ENCODE measurements at regions of chr1 and their contacts with region 1.

Region 1: DNA sequence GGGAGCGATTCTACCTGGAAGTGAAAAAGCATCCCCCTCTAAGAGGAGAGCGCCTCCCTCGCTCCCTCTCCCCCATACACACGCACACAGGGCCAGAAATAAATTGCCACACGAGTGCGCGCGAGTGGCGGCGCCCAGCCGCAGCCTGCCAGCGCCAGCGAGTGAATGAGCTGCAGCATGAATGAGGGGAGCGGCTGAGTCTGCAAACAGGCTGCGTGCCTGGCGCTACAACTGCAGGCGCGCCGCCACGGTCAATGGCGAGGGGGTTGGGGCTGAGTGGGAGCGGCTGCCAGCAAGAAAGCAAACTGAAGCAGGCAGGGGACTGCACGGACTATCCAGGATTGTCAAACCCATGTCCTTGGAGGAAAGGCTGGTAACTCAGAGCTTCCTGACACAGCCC is 2.2 kb downstream of the CAMK1G start:
- DNase-seq: peak; percentile 81
- H3K4me3 ChIP-seq: peak overlapping the region; percentile 31 to 80
- H3K27ac ChIP-seq: peak overlapping the region in 1 of 2 experiments; percentile 89; a peak in 3 of 4 replicates
- H3K4me1 ChIP-seq: peaks cover 18 to 52% of the 10 kb centered on the region in 2 experiments
- H3K27me3 ChIP-seq: no peaks in the 10 kb centered on the region
- CTCF ChIP-seq: peak; percentile 28; the same call in 1 of the 2 replicates
- EP300 ChIP-seq: no peak; a peak in 1 of 4 replicates
- RAD21 ChIP-seq: peak; percentile 19; the same call in 1 of the 2 replicates

Region 2: DNA sequence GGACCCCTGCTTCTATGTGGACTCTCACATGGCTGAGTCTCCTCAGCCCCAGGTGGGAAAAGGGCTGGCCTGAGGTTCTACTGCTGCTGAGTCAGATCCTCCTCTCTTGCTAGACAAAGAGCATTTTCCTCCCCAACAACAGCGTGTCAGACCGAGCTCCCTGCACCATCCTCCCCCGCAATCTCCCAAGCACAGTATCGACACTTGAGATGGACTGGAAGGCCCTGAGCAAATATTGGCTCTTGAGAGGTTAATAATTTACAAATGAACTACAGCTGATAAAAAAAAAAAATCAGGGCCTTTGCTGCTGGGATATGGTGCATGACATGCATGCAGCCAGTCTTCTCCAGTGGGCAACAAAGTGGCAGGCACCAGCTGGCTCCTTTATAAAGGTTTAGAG is 57.7 kb before region 1 on chr1:
- CTCF ChIA-PET with region 1: no interaction called
- POLR2A ChIA-PET with region 1: no interaction called
- DNase-seq: no peak
- H3K4me3 ChIP-seq: no peak overlapping the region
- H3K27ac ChIP-seq: peak overlapping the region in 1 of 2 experiments; percentile 76; a peak in 2 of 4 replicates
- H3K4me1 ChIP-seq: no peaks in the 10 kb centered on the region; a peak in 2 of 4 replicates
- H3K27me3 ChIP-seq: no peaks in the 10 kb centered on the region
- CTCF ChIP-seq: no peak
- EP300 ChIP-seq: no peak
- RAD21 ChIP-seq: no peak

Region 3: GRCh38 chr1:209601809-209602657 is 16.4 kb after region 1 on chr1:
- CTCF ChIA-PET with region 1: interaction called, 22 read pairs
- POLR2A ChIA-PET with region 1: no interaction called
- DNase-seq: peak; percentile 55
- H3K4me3 ChIP-seq: peak overlapping the region in 1 of 2 experiments; percentile 18; a peak in 1 of 4 replicates
- H3K27ac ChIP-seq: peak overlapping the region in 1 of 2 experiments; percentile 79; a peak in 1 of 4 replicates
- H3K4me1 ChIP-seq: peaks cover 0 to 27% of the 10 kb centered on the region in 2 experiments; a peak in 3 of 4 replicates
- H3K27me3 ChIP-seq: no peaks in the 10 kb centered on the region
- CTCF ChIP-seq: peak; percentile 71
- EP300 ChIP-seq: no peak
- RAD21 ChIP-seq: peak; percentile 77

Region 4: DNA sequence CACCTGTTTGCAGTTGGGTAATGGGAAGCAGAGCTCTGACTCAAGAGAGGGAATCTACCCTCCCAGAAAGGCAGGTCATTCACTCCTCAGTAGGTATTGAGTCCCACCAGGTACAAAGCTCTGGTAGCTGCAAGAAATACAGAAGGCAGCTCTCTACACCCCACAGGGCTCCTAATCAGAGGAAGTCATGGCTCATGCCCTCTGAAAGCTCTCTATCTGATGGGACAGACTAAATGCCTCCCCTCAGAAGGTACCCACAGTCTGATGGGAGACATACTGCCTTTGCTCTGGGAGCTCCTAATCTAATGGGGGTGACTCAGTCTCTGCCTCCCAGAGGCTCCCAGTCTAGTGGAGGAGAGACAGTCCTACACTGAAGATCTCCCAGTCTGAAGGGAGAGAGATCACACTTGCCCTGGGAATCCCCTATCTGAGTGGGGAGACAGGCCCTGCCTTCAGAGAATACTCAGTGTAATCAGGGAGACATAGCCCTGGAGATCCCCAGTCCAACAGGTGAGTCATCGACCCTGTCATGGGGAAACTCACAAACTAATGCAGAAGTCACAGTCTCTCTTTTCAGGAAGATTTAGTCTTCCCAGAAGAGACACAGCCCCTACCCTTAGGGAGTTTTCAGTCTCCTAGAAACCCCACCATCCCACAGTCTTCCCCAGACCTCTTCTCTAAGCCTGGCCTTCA is 21.6 kb after region 1 on chr1:
- CTCF ChIA-PET with region 1: interaction called, 22 read pairs
- POLR2A ChIA-PET with region 1: no interaction called
- DNase-seq: no peak
- H3K4me3 ChIP-seq: no peak overlapping the region
- H3K27ac ChIP-seq: peak overlapping the region in 1 of 2 experiments; percentile 38; a peak in 2 of 4 replicates
- H3K4me1 ChIP-seq: peaks cover 0 to 8% of the 10 kb centered on the region in 2 experiments; a peak in 2 of 4 replicates
- H3K27me3 ChIP-seq: no peaks in the 10 kb centered on the region
- CTCF ChIP-seq: no peak
- EP300 ChIP-seq: no peak
- RAD21 ChIP-seq: no peak

Region 5: GRCh38 chr1:209618756-209619420 is 33.2 kb after region 1 on chr1:
- CTCF ChIA-PET with region 1: interaction called, 62 read pairs
- POLR2A ChIA-PET with region 1: no interaction called
- DNase-seq: peak; percentile 53
- H3K4me3 ChIP-seq: no peak overlapping the region
- H3K27ac ChIP-seq: no peak overlapping the region
- H3K4me1 ChIP-seq: peaks cover 9 to 31% of the 10 kb centered on the region in 2 experiments; a peak in 2 of 4 replicates
- H3K27me3 ChIP-seq: no peaks in the 10 kb centered on the region
- CTCF ChIP-seq: no peak
- EP300 ChIP-seq: no peak
- RAD21 ChIP-seq: no peak